Naive thymus-derived CD4-positive, alpha-beta T cell (primary cell): ENCODE measurements at regions of chr1 and their contacts with region 1.

Region 1: DNA sequence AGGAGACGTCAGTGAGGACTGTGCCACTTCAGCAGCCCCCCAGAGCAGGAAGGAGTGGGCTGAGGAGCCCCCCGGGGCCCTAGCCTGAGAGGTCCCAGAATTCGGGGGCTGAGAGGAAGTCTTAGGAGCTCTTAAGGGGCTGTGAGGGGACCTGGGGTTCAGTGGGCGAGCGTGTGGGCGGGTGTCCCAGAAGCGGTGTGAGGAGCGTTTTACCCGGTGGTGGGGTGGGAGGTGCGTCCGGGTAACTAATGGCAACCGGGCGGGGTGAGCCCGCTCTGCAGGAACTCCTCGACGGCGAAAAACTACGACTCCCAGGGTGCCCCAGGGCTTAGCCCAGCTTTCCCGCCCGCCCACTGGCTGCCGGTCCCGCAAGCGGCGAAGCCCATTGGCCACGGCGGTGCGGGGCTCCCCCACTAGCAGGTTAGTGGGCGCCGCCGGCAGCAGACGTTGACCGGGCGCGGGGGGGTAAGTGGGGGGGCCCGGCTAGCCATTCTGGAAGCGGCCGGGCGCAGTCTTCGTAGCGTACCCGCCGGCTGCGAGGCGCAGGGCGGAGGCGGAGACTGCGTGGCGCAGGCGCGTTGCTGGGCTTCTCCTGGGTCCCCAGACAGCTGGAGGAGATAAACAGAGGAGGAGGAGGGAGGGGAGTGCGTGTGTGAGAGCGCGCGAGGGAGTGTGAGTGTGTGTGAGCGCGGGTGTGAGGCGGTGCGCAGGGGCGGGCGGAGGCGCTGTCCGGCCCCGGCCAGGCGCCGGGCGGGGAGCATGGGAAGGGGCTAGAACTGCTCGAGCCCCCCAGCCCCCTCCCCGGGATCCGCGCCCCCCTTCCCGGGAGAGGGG is at the start of gene WDTC1:
- DNase-seq: peak; percentile 91 to 98 (median 97)
- ATAC-seq: peak; percentile 96
- H3K4me3 ChIP-seq: peak within 1 kb of the TSS; percentile 78
- H3K4me3 Mint-ChIP-seq: peak within 1 kb of the TSS; percentile 95 to 100 (median 98)
- H3K27ac ChIP-seq: peak within 1 kb of the TSS; percentile 78
- H3K27ac Mint-ChIP-seq: peak within 1 kb of the TSS; percentile 83 to 97 (median 96)
- H3K4me1 ChIP-seq: peaks cover 18 to 25% of the 10 kb centered on the region in 2 donors
- H3K4me1 Mint-ChIP-seq: peaks cover 25 to 39% (median 35%) of the 10 kb centered on the region in 7 donors
- H3K27me3 ChIP-seq: no peaks in the 10 kb centered on the region
- H3K27me3 Mint-ChIP-seq: peaks cover 0 to 3% (median 0%) of the 10 kb centered on the region in 5 donors
- total RNA-seq, gene WDTC1: 33.2 to 59.0 (median 46.3) TPM

Region 2: DNA sequence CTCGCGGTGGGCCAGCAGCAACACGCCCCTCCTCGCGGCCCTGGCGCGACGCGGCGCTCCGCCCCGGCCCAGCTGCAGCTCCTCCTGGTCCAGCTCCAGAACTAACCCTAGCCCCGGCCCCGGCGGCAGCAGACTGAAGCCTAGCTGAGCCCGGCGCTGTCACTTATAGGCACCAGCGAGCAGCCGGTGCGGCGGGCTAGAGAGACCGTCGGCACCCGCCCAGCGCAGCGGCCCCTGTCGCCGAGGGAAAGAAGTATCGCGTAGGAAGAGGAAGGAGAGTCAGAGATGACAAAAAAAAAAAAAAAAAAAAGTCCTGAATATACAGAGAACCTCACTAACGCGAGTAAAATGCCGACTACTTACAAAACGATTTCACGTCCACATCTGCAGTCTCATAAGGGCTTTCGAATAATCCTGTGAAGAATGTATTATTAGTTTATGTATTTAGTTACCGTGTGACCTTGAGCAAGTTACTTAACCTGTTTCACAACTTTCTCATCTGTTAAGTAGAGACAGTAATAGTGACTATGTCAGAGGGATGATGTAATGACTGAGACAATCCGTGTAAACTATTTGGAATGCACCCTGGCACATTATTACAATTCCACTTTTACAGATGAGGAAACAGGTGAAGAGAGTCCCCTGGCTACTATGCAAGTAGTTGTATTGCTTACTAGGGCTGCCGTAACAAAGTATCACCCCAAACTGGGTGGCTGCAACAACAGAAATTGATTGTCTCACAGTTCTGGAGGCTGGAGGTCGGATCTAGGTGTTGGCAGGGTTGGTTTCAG is 79.1 kb before region 1 on chr1 and contains the start of gene SLC9A1:
- CTCF ChIA-PET with region 1: no interaction called
- POLR2A ChIA-PET with region 1: interaction called, 7 read pairs
- intact Hi-C with region 1: loop called (anchors 1 kb)
- DNase-seq: peak; percentile 90 to 96 (median 94)
- ATAC-seq: peak; percentile 98
- H3K4me3 ChIP-seq: peak within 1 kb of the TSS; percentile 40
- H3K4me3 Mint-ChIP-seq: peak within 1 kb of the TSS; percentile 82 to 97 (median 90)
- H3K27ac ChIP-seq: peak within 1 kb of the TSS; percentile 90
- H3K27ac Mint-ChIP-seq: peak within 1 kb of the TSS; percentile 96 to 100 (median 99)
- H3K4me1 ChIP-seq: peaks cover 29 to 36% of the 10 kb centered on the region in 2 donors
- H3K4me1 Mint-ChIP-seq: peaks cover 38 to 52% (median 49%) of the 10 kb centered on the region in 7 donors
- H3K27me3 ChIP-seq: no peaks in the 10 kb centered on the region
- H3K27me3 Mint-ChIP-seq: no peaks in the 10 kb centered on the region
- total RNA-seq, gene SLC9A1: 13.2 to 25.7 (median 21.1) TPM

Region 3: DNA sequence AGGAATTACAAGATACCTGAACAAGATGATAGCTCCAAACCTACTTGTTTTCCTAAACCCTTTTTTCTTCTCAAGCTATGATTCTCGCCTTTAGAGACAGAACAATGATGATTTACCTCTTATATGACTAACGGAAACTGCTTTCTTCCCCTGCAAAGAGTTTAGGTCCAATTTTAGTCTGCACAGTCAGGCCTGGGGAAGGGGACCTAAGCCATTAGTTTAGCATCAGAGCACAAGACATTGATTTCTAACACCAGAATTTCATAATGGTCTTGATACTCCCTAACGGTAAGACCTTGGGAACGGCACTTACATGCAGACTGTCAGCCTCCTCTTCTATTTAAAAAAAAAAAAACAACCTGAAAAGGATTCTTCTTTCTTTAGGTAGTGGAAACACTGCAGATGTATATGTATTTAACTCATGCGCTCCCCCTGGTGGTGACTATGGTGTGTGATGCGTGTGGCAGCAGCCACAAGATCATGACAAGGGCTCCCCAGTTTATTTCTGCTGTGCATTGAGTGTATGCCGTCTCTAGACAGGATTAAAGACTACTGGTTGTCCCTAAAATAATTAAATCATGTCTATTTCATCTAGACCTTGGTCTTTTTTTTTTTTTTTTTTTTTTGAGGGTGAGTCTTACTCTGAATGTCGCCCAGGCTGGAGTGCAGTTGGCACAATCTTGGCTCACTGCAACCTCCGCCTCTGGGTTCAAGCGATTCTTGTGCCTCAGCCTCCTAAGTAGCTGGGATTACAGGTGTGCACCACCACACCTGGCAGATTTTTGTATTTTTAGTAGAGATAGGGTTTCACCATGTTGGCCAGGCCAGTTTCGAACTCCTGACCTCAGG is 50.4 kb after region 1 on chr1:
- CTCF ChIA-PET with region 1: interaction called, 3 read pairs
- POLR2A ChIA-PET with region 1: no interaction called
- intact Hi-C with region 1: loop called in 1 of 2 experiments (anchors 1 kb)
- DNase-seq: peak; percentile 70 to 88 (median 85)
- ATAC-seq: peak; percentile 96
- H3K4me3 ChIP-seq: no peak overlapping the region
- H3K4me3 Mint-ChIP-seq: no peak overlapping the region
- H3K27ac ChIP-seq: no peak overlapping the region
- H3K27ac Mint-ChIP-seq: peak overlapping the region in 5 of 9 donors; percentile 14 to 72 (median 57)
- H3K4me1 ChIP-seq: no peaks in the 10 kb centered on the region
- H3K4me1 Mint-ChIP-seq: peaks cover 0 to 12% (median 3%) of the 10 kb centered on the region in 7 donors
- H3K27me3 ChIP-seq: no peaks in the 10 kb centered on the region
- H3K27me3 Mint-ChIP-seq: no peaks in the 10 kb centered on the region

Region 4: GRCh38 chr1:27556781-27557595 is 322.7 kb after region 1 on chr1:
- CTCF ChIA-PET with region 1: no interaction called
- POLR2A ChIA-PET with region 1: no interaction called
- intact Hi-C with region 1: no loop called
- DNase-seq: peak; percentile 51 to 79 (median 65)
- ATAC-seq: peak; percentile 87
- H3K4me3 ChIP-seq: no peak overlapping the region
- H3K4me3 Mint-ChIP-seq: peak overlapping the region; percentile 14 to 88 (median 67)
- H3K27ac ChIP-seq: no peak overlapping the region
- H3K27ac Mint-ChIP-seq: peak overlapping the region; percentile 32 to 98 (median 81)
- H3K4me1 ChIP-seq: peaks cover 8 to 16% of the 10 kb centered on the region in 2 donors
- H3K4me1 Mint-ChIP-seq: peaks cover 23 to 56% (median 46%) of the 10 kb centered on the region in 7 donors
- H3K27me3 ChIP-seq: no peaks in the 10 kb centered on the region
- H3K27me3 Mint-ChIP-seq: no peaks in the 10 kb centered on the region

Region 5: DNA sequence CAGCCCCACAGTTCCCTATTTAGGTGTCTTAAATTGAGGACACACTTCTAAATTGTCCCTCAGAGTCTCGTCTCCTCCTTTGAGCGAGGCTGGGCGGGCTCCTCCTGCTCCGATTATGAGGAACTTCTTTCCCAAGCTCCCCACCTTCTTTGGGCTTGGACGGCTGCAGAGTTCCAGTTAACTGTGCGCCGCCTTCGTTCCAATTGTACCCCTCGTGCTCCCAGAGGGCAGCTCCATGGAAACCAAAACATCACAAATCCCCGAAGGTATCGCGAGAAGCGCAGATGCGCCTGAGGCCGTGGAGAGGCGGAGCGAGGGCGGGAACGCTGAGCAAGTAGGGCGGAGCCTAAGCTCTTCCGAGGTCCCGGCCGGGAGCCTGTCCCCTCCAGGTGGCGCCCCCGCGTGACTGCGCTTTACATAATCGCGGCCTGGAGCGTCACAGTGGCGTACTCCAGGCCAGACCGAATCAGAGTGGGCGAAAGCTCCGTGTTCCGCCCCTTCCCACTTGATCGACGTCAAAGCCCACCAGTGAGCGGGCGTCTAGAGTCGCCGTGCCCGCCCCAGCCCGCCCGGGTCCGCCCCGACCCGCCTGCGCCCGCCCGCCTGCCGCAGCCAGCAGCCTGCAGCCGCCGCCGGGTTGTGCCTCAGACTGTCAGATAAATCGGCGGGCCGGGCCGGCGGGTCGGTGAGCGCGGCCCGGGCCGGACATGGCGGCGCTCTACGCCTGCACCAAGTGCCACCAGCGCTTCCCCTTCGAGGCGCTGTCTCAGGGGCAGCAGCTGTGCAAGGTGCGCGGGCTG is 491.3 kb after region 1 on chr1 and contains the start of gene FAM76A:
- CTCF ChIA-PET with region 1: no interaction called
- POLR2A ChIA-PET with region 1: no interaction called
- intact Hi-C with region 1: loop called in 1 of 2 experiments (anchors 2 kb)
- DNase-seq: peak; percentile 97 to 100 (median 99)
- ATAC-seq: peak; percentile 97
- H3K4me3 ChIP-seq: peak within 1 kb of the TSS; percentile 77
- H3K4me3 Mint-ChIP-seq: peak within 1 kb of the TSS; percentile 86 to 93 (median 90)
- H3K27ac ChIP-seq: peak within 1 kb of the TSS; percentile 91
- H3K27ac Mint-ChIP-seq: peak within 1 kb of the TSS; percentile 93 to 100 (median 98)
- H3K4me1 ChIP-seq: peaks cover 7 to 17% of the 10 kb centered on the region in 2 donors
- H3K4me1 Mint-ChIP-seq: peaks cover 9 to 35% (median 28%) of the 10 kb centered on the region in 7 donors
- H3K27me3 ChIP-seq: no peaks in the 10 kb centered on the region
- H3K27me3 Mint-ChIP-seq: no peaks in the 10 kb centered on the region
- total RNA-seq, gene FAM76A: 15.2 to 25.2 (median 22.2) TPM

Region 6: DNA sequence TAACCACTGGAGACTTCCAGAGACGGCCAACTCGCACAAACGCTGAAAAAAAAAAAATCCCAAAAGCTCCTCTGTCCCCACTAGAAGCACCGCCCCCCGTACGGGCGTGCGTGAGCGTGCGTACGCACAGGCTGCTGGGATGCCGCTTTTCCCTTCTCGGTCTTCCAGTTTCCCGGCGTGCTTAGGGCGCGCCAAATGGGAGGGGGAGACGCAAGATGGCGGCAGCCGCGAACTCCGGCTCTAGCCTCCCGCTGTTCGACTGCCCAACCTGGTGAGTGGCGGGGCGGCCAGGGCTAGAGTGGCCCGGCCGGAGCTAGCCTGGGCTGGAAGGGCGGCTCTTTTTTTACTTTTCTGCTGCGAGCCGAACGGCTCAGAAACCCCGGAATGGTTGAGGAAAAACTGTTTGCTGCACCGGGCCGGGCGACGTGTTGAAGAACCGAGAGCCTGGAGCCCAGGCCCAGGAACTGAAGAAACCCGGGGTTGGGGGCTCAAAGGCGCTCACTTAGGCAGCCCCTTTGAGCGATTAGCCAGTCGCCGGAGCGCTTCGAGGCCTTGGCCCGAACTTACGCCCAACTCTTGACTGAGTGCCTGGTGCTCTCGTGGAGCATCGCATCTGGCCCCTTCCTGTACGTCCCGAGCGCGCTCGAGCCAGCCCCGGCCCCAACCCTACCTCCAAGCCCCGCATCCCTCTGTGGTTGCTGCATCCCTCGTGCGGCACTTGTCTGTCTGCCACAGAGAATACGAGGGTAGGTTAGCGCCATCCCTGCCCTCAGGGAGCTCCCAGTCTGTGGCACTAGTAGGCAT is 596.6 kb after region 1 on chr1 and contains the start of gene PPP1R8:
- CTCF ChIA-PET with region 1: no interaction called
- POLR2A ChIA-PET with region 1: interaction called, 4 read pairs
- intact Hi-C with region 1: loop called in 1 of 2 experiments (anchors 10 kb)
- DNase-seq: peak; percentile 57 to 89 (median 86)
- ATAC-seq: peak; percentile 100
- H3K4me3 ChIP-seq: peak within 1 kb of the TSS; percentile 71
- H3K4me3 Mint-ChIP-seq: peak within 1 kb of the TSS; percentile 90 to 96 (median 93)
- H3K27ac ChIP-seq: peak within 1 kb of the TSS; percentile 92
- H3K27ac Mint-ChIP-seq: peak within 1 kb of the TSS; percentile 86 to 96 (median 92)
- H3K4me1 ChIP-seq: peaks cover 16% of the 10 kb centered on the region in 2 donors
- H3K4me1 Mint-ChIP-seq: peaks cover 16 to 51% (median 38%) of the 10 kb centered on the region in 7 donors
- H3K27me3 ChIP-seq: no peaks in the 10 kb centered on the region
- H3K27me3 Mint-ChIP-seq: no peaks in the 10 kb centered on the region
- total RNA-seq, gene PPP1R8: 17.5 to 60.2 (median 39.5) TPM